ENCODE measurements at regions of chr14 and their contacts with region 1.

Region 1: GRCh38 chr14:49920935-49921334 is 28.1 kb downstream of the ARF6 start:
- DNase-seq: no peak
- H3K4me3 ChIP-seq: no peak overlapping the region
- H3K27ac ChIP-seq: no peak overlapping the region
- H3K4me1 ChIP-seq: 0 out of 2 replicates have a peak, but pooled peaks cover 6% of the 10 kb centered on the region
- H3K27me3 ChIP-seq: no peaks in the 10 kb centered on the region
- CTCF ChIP-seq: no peak

Region 2: DNA sequence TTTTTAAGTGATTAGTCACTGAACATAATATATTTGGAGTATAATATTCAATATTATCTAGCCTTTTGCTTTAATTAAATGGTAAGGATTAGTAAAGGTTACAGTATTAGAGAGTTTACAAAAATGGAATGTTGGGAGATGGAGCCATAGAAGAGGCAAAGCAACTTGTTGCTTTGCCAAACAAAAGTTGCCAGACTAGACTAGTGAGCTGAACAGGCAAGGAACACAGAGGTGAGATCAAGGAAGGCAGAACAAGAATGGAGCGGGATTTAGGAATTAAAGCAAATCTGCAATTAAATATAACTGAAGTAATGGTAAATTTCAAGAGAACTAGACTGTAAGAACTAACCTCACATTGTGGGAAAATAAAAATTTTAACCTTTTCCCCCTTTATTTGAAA is 23.0 kb before region 1 on chr14:
- CTCF ChIA-PET with region 1: no interaction called
- POLR2A ChIA-PET with region 1: interaction called, 15 read pairs
- intact Hi-C with region 1: no loop called
- DNase-seq: peak in 1 of 2 experiments; percentile 62
- H3K4me3 ChIP-seq: peak overlapping the region; percentile 99; the same call in 1 of the 2 replicates
- H3K27ac ChIP-seq: peak overlapping the region; percentile 96
- H3K4me1 ChIP-seq: peaks cover 29% of the 10 kb centered on the region
- H3K27me3 ChIP-seq: no peaks in the 10 kb centered on the region
- CTCF ChIP-seq: no peak

Region 3: DNA sequence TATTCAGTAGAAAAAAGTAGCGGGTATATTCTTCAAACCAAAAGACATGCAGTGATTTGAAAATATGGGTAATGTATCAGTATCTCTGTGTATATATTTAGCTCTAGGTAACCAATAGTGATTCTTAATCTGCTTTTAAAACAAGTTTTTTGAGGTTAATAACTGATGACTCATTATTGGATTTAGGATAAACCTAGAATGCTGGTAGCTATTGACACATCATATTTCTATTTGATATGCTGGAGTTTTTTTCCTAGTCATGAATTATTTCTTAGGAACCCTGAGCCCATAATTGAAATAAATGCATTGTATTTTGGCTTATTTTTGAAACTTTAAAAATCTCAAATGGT is 12.5 kb before region 1 on chr14:
- CTCF ChIA-PET with region 1: no interaction called
- POLR2A ChIA-PET with region 1: interaction called, 18 read pairs
- intact Hi-C with region 1: no loop called
- DNase-seq: peak in 1 of 2 experiments; percentile 85
- H3K4me3 ChIP-seq: no peak overlapping the region
- H3K27ac ChIP-seq: peak overlapping the region; percentile 86
- H3K4me1 ChIP-seq: peaks cover 50% of the 10 kb centered on the region
- H3K27me3 ChIP-seq: no peaks in the 10 kb centered on the region
- CTCF ChIP-seq: no peak

Region 4: GRCh38 chr14:50045039-50045711 is 124.2 kb after region 1 on chr14:
- CTCF ChIA-PET with region 1: no interaction called
- POLR2A ChIA-PET with region 1: no interaction called
- intact Hi-C with region 1: no loop called
- DNase-seq: peak; percentile 63 to 89
- H3K4me3 ChIP-seq: no peak overlapping the region
- H3K27ac ChIP-seq: peak overlapping the region; percentile 99
- H3K4me1 ChIP-seq: peaks cover 81% of the 10 kb centered on the region
- H3K27me3 ChIP-seq: no peaks in the 10 kb centered on the region
- CTCF ChIP-seq: no peak

Measured in PC-9 (cell line).